Cardiac septum (tissue), 1 donor: ENCODE measurements at regions of chr6 and their contacts with region 1.

Region 1: GRCh38 chr6:128487055-128487454 is 33.3 kb downstream of the PTPRK start:
- DNase-seq: no peak

Region 2: DNA sequence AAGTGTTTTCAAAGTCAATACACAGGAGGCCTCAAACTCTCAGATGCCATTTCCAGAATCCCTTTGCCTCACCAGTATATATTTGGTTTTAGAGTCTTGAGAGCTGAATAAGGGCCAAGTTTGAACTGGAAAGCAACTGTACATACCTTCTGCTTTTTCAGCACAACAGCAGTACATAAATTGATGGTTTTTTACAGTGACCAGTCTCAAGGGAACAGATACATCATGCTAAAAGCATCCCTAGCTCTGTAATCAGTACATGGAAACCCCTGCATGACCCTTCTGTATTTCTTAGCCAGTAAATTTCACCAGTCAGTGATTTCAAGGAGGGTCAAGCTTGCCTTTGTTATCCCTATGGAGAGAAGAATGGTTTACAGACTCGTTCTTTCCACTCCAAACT is 1103.1 kb before region 1 on chr6:
- intact Hi-C with region 1: no loop called
- DNase-seq: no peak

Region 3: GRCh38 chr6:128339635-128340450 is 147.2 kb before region 1 on chr6:
- intact Hi-C with region 1: loop called (anchors 10 kb)
- DNase-seq: no peak